IMR-90 (cell line): ENCODE measurements at regions of chr13 and their contacts with region 1.

Region 1: DNA sequence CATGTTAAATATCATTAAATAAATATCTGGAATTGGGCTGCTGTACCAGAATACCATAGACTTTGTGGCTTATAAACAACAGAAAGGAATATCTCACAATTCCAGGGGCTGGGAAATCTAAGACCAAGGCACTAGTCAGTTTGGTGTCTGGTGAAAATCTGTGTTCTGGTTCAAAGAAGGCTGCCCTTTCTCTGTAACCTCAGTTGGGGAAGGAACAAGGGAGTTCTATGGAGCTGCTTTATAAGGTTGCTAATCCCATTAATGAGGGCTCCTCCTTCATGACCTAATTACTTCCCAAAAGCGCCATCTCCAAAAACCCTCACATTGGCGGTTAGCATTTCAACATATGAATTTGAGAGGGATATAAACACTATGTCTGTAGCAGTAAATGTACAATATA is 480.9 kb downstream of the GPC5 start:
- DNase-seq: no peak
- ATAC-seq: no peak
- H3K4me3 ChIP-seq: no peak overlapping the region
- H3K27ac ChIP-seq: no peak overlapping the region
- H3K4me1 ChIP-seq: no peaks in the 10 kb centered on the region
- H3K27me3 ChIP-seq: no peaks in the 10 kb centered on the region
- CTCF ChIP-seq: no peak
- POLR2A ChIP-seq: no peak
- RAD21 ChIP-seq: no peak

Region 2: GRCh38 chr13:89883893-89884448 is 1995.4 kb before region 1 on chr13:
- CTCF ChIA-PET with region 1: interaction called, 11 read pairs
- POLR2A ChIA-PET with region 1: no interaction called
- dilution Hi-C with region 1: no loop called
- in situ Hi-C with region 1: no loop called
- intact Hi-C with region 1: no loop called
- DNase-seq: no peak
- ATAC-seq: no peak
- H3K4me3 ChIP-seq: no peak overlapping the region
- H3K27ac ChIP-seq: no peak overlapping the region
- H3K4me1 ChIP-seq: no peaks in the 10 kb centered on the region
- H3K27me3 ChIP-seq: no peaks in the 10 kb centered on the region
- CTCF ChIP-seq: no peak
- POLR2A ChIP-seq: no peak
- RAD21 ChIP-seq: no peak

Region 3: DNA sequence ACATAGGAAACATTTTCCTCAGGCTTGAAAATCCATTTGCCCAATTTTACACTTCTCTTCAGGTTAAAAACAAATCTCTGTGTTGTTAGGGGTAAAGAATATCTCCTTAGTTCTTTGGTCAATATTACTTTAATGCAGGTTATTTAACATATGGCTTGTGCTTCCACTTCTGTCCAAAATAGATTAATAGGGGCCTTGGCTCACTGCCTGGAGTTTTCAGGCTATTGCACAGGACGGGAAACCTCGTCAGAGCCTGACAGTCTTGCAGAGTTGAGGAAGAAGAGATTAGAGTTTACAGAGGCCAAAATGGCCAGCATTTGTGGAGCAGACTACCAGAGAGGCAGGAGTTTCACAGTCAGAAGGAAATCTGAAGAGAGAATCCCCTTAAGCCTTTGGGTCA is 483.4 kb after region 1 on chr13:
- CTCF ChIA-PET with region 1: no interaction called
- POLR2A ChIA-PET with region 1: no interaction called
- dilution Hi-C with region 1: no loop called
- in situ Hi-C with region 1: no loop called
- intact Hi-C with region 1: no loop called
- DNase-seq: peak; percentile 7
- ATAC-seq: no peak
- H3K4me3 ChIP-seq: no peak overlapping the region
- H3K27ac ChIP-seq: no peak overlapping the region
- H3K4me1 ChIP-seq: no peaks in the 10 kb centered on the region
- H3K27me3 ChIP-seq: no peaks in the 10 kb centered on the region
- CTCF ChIP-seq: no peak
- POLR2A ChIP-seq: no peak
- RAD21 ChIP-seq: no peak